ENCODE measurements at regions of chr5 and their contacts with region 1.

Region 1: GRCh38 chr5:52948418-52949076 is 40.6 kb upstream of the ITGA2 start:
- DNase-seq: peak; percentile 84
- ATAC-seq: peak; percentile 99
- H3K4me3 Mint-ChIP-seq: no peak overlapping the region
- H3K27ac Mint-ChIP-seq: peak overlapping the region; percentile 74
- H3K4me1 Mint-ChIP-seq: peaks cover 35% of the 10 kb centered on the region
- H3K27me3 Mint-ChIP-seq: no peaks in the 10 kb centered on the region

Region 2: DNA sequence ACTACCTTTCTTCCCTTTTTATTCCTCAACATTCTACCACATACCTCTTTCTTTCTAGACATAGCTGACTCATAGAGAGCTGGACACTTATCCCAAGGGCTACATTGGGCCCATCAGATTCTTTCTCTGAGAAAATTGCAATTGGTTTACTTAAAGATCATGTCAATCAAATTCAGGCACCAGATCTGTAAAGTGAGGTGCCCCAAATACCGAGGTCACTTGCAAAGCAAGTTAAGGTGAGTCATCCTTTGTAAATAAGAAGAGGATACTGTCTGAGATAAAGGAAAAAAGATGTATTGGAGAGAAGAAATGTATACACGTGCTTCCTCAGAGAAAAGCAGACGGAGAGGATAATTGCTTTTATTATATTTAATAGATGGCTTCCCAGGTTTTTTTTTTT is 524.1 kb before region 1 on chr5:
- CTCF ChIA-PET with region 1: no interaction called
- DNase-seq: no peak
- ATAC-seq: no peak
- H3K4me3 Mint-ChIP-seq: no peak overlapping the region
- H3K27ac Mint-ChIP-seq: no peak overlapping the region
- H3K4me1 Mint-ChIP-seq: no peaks in the 10 kb centered on the region
- H3K27me3 Mint-ChIP-seq: no peaks in the 10 kb centered on the region

Region 3: GRCh38 chr5:52856564-52856963 is 92.0 kb before region 1 on chr5:
- CTCF ChIA-PET with region 1: no interaction called
- DNase-seq: no peak
- ATAC-seq: no peak
- H3K4me3 Mint-ChIP-seq: no peak overlapping the region
- H3K27ac Mint-ChIP-seq: no peak overlapping the region
- H3K4me1 Mint-ChIP-seq: peaks cover 7% of the 10 kb centered on the region
- H3K27me3 Mint-ChIP-seq: no peaks in the 10 kb centered on the region

Region 4: GRCh38 chr5:52989781-52990527 is 41.4 kb after region 1 on chr5:
- CTCF ChIA-PET with region 1: interaction called, 28 read pairs
- DNase-seq: peak; percentile 67
- ATAC-seq: peak; percentile 56
- H3K4me3 Mint-ChIP-seq: peak overlapping the region; percentile 81
- H3K27ac Mint-ChIP-seq: peak overlapping the region; percentile 67
- H3K4me1 Mint-ChIP-seq: peaks cover 56% of the 10 kb centered on the region
- H3K27me3 Mint-ChIP-seq: peaks cover 13% of the 10 kb centered on the region

Region 5: GRCh38 chr5:53035868-53036381 is 87.4 kb after region 1 on chr5:
- CTCF ChIA-PET with region 1: interaction called, 14 read pairs
- DNase-seq: no peak
- ATAC-seq: no peak
- H3K4me3 Mint-ChIP-seq: no peak overlapping the region
- H3K27ac Mint-ChIP-seq: peak overlapping the region; percentile 4
- H3K4me1 Mint-ChIP-seq: peaks cover 81% of the 10 kb centered on the region
- H3K27me3 Mint-ChIP-seq: no peaks in the 10 kb centered on the region

Region 6: DNA sequence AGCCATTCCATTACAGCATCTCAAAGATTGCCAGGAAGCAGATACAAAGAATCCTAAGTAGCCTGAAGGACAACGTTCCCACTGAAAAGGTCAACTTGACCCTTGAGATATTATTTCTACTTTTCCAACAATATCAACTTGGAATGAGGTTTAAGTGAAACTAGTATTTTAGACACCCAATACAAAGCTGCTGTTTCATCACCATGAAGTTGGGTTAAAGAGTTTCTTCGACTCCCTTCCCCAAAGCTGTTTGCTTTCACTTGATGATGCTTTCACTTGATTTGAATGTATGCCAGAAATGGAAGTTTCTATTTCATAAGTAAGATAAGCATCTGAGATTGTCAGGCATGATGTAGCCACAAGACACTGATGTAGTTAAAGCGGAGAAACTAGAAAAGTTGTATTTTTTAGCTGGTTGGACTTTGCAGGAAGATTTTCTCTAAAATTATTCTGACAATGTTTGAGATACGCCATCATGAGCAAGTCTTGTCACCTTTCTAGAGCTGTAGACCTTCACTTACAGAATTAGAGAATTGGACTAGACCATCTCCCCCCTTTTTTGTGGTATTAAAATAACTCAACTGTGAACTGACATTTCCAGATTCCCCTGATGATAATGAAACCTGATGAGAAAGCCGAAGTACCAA is 140.9 kb after region 1 on chr5:
- CTCF ChIA-PET with region 1: interaction called, 79 read pairs
- DNase-seq: no peak
- ATAC-seq: peak; percentile 64
- H3K4me3 Mint-ChIP-seq: peak overlapping the region; percentile 26
- H3K27ac Mint-ChIP-seq: peak overlapping the region; percentile 71
- H3K4me1 Mint-ChIP-seq: peaks cover 37% of the 10 kb centered on the region
- H3K27me3 Mint-ChIP-seq: no peaks in the 10 kb centered on the region

Region 7: GRCh38 chr5:53105611-53106300 is 157.2 kb after region 1 on chr5:
- CTCF ChIA-PET with region 1: interaction called, 25 read pairs
- DNase-seq: no peak
- ATAC-seq: no peak
- H3K4me3 Mint-ChIP-seq: no peak overlapping the region
- H3K27ac Mint-ChIP-seq: no peak overlapping the region
- H3K4me1 Mint-ChIP-seq: peaks cover 46% of the 10 kb centered on the region
- H3K27me3 Mint-ChIP-seq: no peaks in the 10 kb centered on the region

Measured in activated CD8-positive, alpha-beta memory T cell treated with anti-CD3 and anti-CD28 coated beads, Interleukin-2, amount 10 ng/mL, durations not matched to agents 7 days and 5 days (primary cell).